ENCODE measurements at regions of chr1 and their contacts with region 1.

Region 1: GRCh38 chr1:160607011-160607671 is 27.8 kb upstream of the CD84 start:
- DNase-seq: peak in 7 of 9 donors; percentile 71 to 85 (median 80)
- ATAC-seq: peak; percentile 99
- H3K4me3 ChIP-seq: no peak overlapping the region
- H3K4me3 Mint-ChIP-seq: peak overlapping the region in 8 of 10 donors; percentile 30 to 60 (median 53)
- H3K27ac ChIP-seq: no peak overlapping the region
- H3K27ac Mint-ChIP-seq: peak overlapping the region; percentile 52 to 85 (median 81)
- H3K4me1 ChIP-seq: peaks cover 6 to 15% of the 10 kb centered on the region in 2 donors
- H3K4me1 Mint-ChIP-seq: peaks cover 22 to 60% (median 39%) of the 10 kb centered on the region in 7 donors
- H3K27me3 ChIP-seq: no peaks in the 10 kb centered on the region
- H3K27me3 Mint-ChIP-seq: no peaks in the 10 kb centered on the region

Region 2: GRCh38 chr1:160193091-160193819 is 413.9 kb before region 1 on chr1:
- CTCF ChIA-PET with region 1: no interaction called
- POLR2A ChIA-PET with region 1: no interaction called
- intact Hi-C with region 1: loop called in 1 of 2 experiments (anchors 1 kb)
- DNase-seq: peak; percentile 34 to 84 (median 70)
- ATAC-seq: peak; percentile 92
- H3K4me3 ChIP-seq: no peak overlapping the region
- H3K4me3 Mint-ChIP-seq: no peak overlapping the region
- H3K27ac ChIP-seq: no peak overlapping the region
- H3K27ac Mint-ChIP-seq: no peak overlapping the region
- H3K4me1 ChIP-seq: no peaks in the 10 kb centered on the region
- H3K4me1 Mint-ChIP-seq: peaks cover 0 to 2% (median 0%) of the 10 kb centered on the region in 7 donors
- H3K27me3 ChIP-seq: no peaks in the 10 kb centered on the region
- H3K27me3 Mint-ChIP-seq: peaks cover 0 to 5% (median 0%) of the 10 kb centered on the region in 5 donors

Region 3: GRCh38 chr1:160354388-160354985 is 252.7 kb before region 1 on chr1:
- CTCF ChIA-PET with region 1: no interaction called
- POLR2A ChIA-PET with region 1: interaction called, 3 read pairs
- intact Hi-C with region 1: loop called in 1 of 2 experiments (anchors 1 kb)
- DNase-seq: peak in 5 of 9 donors; percentile 8 to 23 (median 17)
- ATAC-seq: peak; percentile 45
- H3K4me3 ChIP-seq: no peak overlapping the region
- H3K4me3 Mint-ChIP-seq: no peak overlapping the region
- H3K27ac ChIP-seq: no peak overlapping the region
- H3K27ac Mint-ChIP-seq: peak overlapping the region in 4 of 9 donors; percentile 28 to 44 (median 40)
- H3K4me1 ChIP-seq: no peaks in the 10 kb centered on the region
- H3K4me1 Mint-ChIP-seq: peaks cover 0 to 5% (median 0%) of the 10 kb centered on the region in 7 donors
- H3K27me3 ChIP-seq: no peaks in the 10 kb centered on the region
- H3K27me3 Mint-ChIP-seq: no peaks in the 10 kb centered on the region

Region 4: DNA sequence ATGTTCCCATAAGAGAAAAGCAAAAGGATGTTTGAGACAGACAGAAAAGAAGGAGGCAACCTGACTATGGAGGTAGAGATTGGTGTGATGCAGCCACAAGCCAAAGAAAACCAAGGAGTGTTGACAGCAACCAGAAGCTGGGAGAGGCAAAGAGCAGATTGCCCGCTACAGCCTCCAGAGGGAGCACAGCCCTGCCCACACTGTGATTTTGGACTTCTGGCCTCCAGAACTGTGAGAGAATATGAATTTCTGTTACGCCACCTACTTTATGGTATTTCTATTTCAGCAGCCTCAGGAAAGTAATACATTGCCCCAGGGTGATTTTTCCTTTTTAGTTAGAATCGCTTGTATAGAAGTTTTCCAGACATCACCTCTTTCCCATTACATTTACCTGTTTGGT is 112.5 kb before region 1 on chr1:
- CTCF ChIA-PET with region 1: interaction called, 6 read pairs
- POLR2A ChIA-PET with region 1: no interaction called
- intact Hi-C with region 1: loop called in 1 of 2 experiments (anchors 1 kb)
- DNase-seq: no peak
- ATAC-seq: no peak
- H3K4me3 ChIP-seq: no peak overlapping the region
- H3K4me3 Mint-ChIP-seq: no peak overlapping the region
- H3K27ac ChIP-seq: no peak overlapping the region
- H3K27ac Mint-ChIP-seq: peak overlapping the region in 5 of 9 donors; percentile 14 to 66 (median 32)
- H3K4me1 ChIP-seq: peaks cover 0 to 3% of the 10 kb centered on the region in 2 donors
- H3K4me1 Mint-ChIP-seq: peaks cover 4 to 37% (median 21%) of the 10 kb centered on the region in 7 donors
- H3K27me3 ChIP-seq: no peaks in the 10 kb centered on the region
- H3K27me3 Mint-ChIP-seq: no peaks in the 10 kb centered on the region

Region 5: GRCh38 chr1:160567858-160568682 is 39.1 kb before region 1 on chr1:
- CTCF ChIA-PET with region 1: interaction called, 3 read pairs
- POLR2A ChIA-PET with region 1: interaction called, 5 read pairs
- intact Hi-C with region 1: loop called in 1 of 2 experiments (anchors 1 kb)
- DNase-seq: peak in 8 of 9 donors; percentile 49 to 70 (median 59)
- ATAC-seq: peak; percentile 92
- H3K4me3 ChIP-seq: peak overlapping the region; percentile 11
- H3K4me3 Mint-ChIP-seq: peak overlapping the region; percentile 6 to 90 (median 73)
- H3K27ac ChIP-seq: peak overlapping the region; percentile 67
- H3K27ac Mint-ChIP-seq: peak overlapping the region; percentile 86 to 98 (median 89)
- H3K4me1 ChIP-seq: peaks cover 75 to 96% of the 10 kb centered on the region in 2 donors
- H3K4me1 Mint-ChIP-seq: peaks cover 63 to 95% (median 83%) of the 10 kb centered on the region in 7 donors
- H3K27me3 ChIP-seq: no peaks in the 10 kb centered on the region
- H3K27me3 Mint-ChIP-seq: no peaks in the 10 kb centered on the region

Region 6: DNA sequence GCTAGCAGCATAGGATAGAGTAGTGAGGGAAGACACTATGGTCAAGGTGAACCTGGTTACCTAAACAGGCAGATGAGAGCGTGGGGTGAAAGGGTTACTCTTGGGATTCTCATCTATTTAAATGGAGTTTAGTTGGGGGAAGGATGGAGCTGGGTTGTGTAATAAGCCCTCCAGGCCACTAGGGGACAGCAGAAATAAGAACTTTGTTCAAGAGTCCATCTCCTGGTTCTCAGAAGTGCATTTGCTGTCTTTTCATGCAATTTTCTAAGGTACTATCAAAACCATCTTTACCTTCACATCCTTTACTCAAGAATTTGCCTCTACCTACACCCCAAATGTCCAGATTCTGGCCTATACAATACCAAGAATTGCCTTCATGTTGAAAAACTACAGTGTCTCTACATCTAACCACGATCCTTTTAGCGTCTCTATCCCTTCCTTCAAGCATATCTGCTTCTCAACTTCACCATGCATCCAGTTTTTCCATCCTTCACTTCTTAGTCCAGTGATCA is 11.7 kb after region 1 on chr1:
- CTCF ChIA-PET with region 1: interaction called, 21 read pairs
- POLR2A ChIA-PET with region 1: interaction called, 6 read pairs
- intact Hi-C with region 1: no loop called
- DNase-seq: peak in 6 of 9 donors; percentile 34 to 49 (median 46)
- ATAC-seq: peak; percentile 83
- H3K4me3 ChIP-seq: no peak overlapping the region
- H3K4me3 Mint-ChIP-seq: peak overlapping the region in 3 of 10 donors; percentile 2 to 46 (median 24)
- H3K27ac ChIP-seq: no peak overlapping the region
- H3K27ac Mint-ChIP-seq: peak overlapping the region; percentile 21 to 83 (median 69)
- H3K4me1 ChIP-seq: peaks cover 23% of the 10 kb centered on the region in 2 donors
- H3K4me1 Mint-ChIP-seq: peaks cover 32 to 84% (median 68%) of the 10 kb centered on the region in 7 donors
- H3K27me3 ChIP-seq: no peaks in the 10 kb centered on the region
- H3K27me3 Mint-ChIP-seq: no peaks in the 10 kb centered on the region

Region 7: DNA sequence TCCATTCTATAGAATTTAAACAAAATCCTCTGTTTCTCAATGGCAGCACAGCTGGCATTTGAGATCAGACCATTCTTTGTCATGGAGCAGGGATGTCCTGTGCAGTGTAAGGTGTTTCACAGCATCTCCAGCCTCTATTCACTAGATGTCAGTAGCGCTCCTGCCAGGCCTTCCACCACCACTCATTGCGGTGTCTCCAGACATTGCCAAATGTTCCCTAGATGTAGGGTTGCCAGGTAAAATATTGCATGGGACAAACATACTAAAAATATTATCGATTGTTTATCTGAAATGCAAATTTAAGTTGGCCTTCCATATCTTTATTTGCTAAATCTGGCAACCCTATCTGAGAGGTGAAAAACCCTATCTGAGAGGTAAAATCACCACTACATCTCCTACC is 335.8 kb after region 1 on chr1:
- CTCF ChIA-PET with region 1: no interaction called
- POLR2A ChIA-PET with region 1: no interaction called
- intact Hi-C with region 1: no loop called
- DNase-seq: no peak
- ATAC-seq: no peak
- H3K4me3 ChIP-seq: no peak overlapping the region
- H3K4me3 Mint-ChIP-seq: no peak overlapping the region
- H3K27ac ChIP-seq: no peak overlapping the region
- H3K27ac Mint-ChIP-seq: no peak overlapping the region
- H3K4me1 ChIP-seq: no peaks in the 10 kb centered on the region
- H3K4me1 Mint-ChIP-seq: no peaks in the 10 kb centered on the region
- H3K27me3 ChIP-seq: no peaks in the 10 kb centered on the region
- H3K27me3 Mint-ChIP-seq: peaks cover 0 to 34% (median 0%) of the 10 kb centered on the region in 5 donors

Measured in naive thymus-derived CD4-positive, alpha-beta T cell (primary cell).